Naive thymus-derived CD4-positive, alpha-beta T cell (primary cell): ENCODE measurements at regions of chr12 and their contacts with region 1.

Region 1: GRCh38 chr12:62250671-62251608 is 9.3 kb upstream of the USP15 start:
- DNase-seq: peak in 4 of 9 donors; percentile 12 to 34 (median 24)
- ATAC-seq: peak; percentile 42
- H3K4me3 ChIP-seq: no peak overlapping the region
- H3K4me3 Mint-ChIP-seq: peak overlapping the region; percentile 46 to 84 (median 78)
- H3K27ac ChIP-seq: peak overlapping the region; percentile 53
- H3K27ac Mint-ChIP-seq: peak overlapping the region; percentile 86 to 99 (median 93)
- H3K4me1 ChIP-seq: peaks cover 0 to 18% of the 10 kb centered on the region in 2 donors
- H3K4me1 Mint-ChIP-seq: peaks cover 21 to 48% (median 38%) of the 10 kb centered on the region in 7 donors
- H3K27me3 ChIP-seq: no peaks in the 10 kb centered on the region
- H3K27me3 Mint-ChIP-seq: peaks cover 0 to 3% (median 0%) of the 10 kb centered on the region in 5 donors

Region 2: DNA sequence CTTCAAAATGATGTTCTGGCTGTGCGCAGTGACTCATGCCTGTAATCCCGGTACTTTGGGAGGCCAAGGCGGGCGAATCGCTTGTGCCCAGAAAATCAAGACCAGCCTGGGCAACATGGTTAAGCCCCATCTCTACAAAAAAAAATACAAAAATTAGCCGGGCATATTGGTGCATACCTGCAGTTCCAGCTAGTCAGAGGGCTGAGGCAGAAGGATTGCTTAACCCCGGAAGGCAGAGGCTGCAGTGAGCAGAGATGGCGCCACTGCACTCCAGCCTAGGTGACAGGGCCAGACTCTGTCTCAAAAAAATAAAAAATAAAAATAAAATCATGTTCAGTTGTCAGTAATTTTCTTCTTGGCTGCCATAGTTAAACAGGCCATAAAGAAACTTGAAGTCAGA is 236.6 kb before region 1 on chr12:
- CTCF ChIA-PET with region 1: no interaction called
- POLR2A ChIA-PET with region 1: no interaction called
- intact Hi-C with region 1: no loop called
- DNase-seq: no peak
- ATAC-seq: no peak
- H3K4me3 ChIP-seq: no peak overlapping the region
- H3K4me3 Mint-ChIP-seq: no peak overlapping the region
- H3K27ac ChIP-seq: no peak overlapping the region
- H3K27ac Mint-ChIP-seq: no peak overlapping the region
- H3K4me1 ChIP-seq: no peaks in the 10 kb centered on the region
- H3K4me1 Mint-ChIP-seq: no peaks in the 10 kb centered on the region
- H3K27me3 ChIP-seq: no peaks in the 10 kb centered on the region
- H3K27me3 Mint-ChIP-seq: peaks cover 0 to 7% (median 5%) of the 10 kb centered on the region in 5 donors

Region 3: GRCh38 chr12:62215506-62215905 is 35.4 kb before region 1 on chr12:
- CTCF ChIA-PET with region 1: interaction called, 3 read pairs
- POLR2A ChIA-PET with region 1: interaction called, 3 read pairs
- intact Hi-C with region 1: loop called in 1 of 2 experiments (anchors 2 kb)
- DNase-seq: peak in 3 of 9 donors; percentile 31 to 49 (median 45)
- ATAC-seq: no peak
- H3K4me3 ChIP-seq: no peak overlapping the region
- H3K4me3 Mint-ChIP-seq: peak overlapping the region; percentile 16 to 80 (median 66)
- H3K27ac ChIP-seq: no peak overlapping the region
- H3K27ac Mint-ChIP-seq: peak overlapping the region; percentile 57 to 90 (median 74)
- H3K4me1 ChIP-seq: peaks cover 0 to 22% of the 10 kb centered on the region in 2 donors
- H3K4me1 Mint-ChIP-seq: peaks cover 11 to 57% (median 39%) of the 10 kb centered on the region in 7 donors
- H3K27me3 ChIP-seq: no peaks in the 10 kb centered on the region
- H3K27me3 Mint-ChIP-seq: peaks cover 0 to 14% (median 0%) of the 10 kb centered on the region in 5 donors

Region 4: DNA sequence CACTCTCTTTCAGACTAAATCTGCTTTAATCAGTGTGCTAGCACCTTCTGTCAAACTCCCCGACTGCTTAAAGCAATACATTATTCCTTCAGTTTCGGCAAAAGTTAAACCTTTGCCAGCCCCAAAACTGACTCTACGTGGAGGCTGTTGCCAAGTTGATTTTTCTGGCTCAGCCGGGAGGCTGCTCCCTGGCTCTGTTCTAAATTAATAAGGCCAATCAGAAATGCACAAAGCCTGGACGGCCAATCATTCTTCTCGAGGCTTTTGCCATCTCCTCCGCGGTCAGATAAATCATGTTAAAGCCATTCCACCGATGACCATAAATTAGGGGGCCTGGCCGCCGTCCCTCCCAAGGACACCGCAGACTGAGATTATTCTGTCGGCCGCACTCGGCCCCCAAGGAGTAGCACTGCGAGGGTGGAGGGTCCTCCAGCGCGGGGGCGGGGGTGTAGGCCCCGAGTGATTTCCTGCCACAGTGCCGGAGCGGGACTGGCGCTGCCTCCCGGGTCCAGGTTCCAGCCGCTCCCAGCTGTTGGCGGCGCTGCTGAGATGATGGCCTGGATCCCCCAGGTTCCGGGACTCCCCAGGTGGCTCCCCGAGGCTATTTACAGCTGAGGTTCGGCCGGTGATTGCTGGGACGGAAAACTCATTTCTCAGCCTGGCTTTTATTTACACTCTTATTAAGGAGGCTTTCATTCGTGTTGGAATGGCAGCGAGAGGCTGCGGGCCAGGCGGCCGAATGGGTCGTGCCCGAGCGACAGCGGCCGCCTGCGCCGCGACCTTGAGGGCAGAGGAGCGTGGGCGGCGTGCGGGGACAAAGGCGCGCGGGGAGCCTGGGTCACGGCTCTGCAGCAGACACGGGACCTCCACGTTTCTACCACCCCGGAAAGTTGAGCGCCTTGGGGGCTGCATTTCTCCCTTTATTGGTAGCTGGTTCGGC is 380.8 kb after region 1 on chr12:
- CTCF ChIA-PET with region 1: no interaction called
- POLR2A ChIA-PET with region 1: no interaction called
- intact Hi-C with region 1: no loop called
- DNase-seq: peak in 6 of 9 donors; percentile 8 to 18 (median 12)
- ATAC-seq: peak; percentile 65
- H3K4me3 ChIP-seq: peak overlapping the region; percentile 45
- H3K4me3 Mint-ChIP-seq: peak overlapping the region; percentile 77 to 90 (median 84)
- H3K27ac ChIP-seq: no peak overlapping the region
- H3K27ac Mint-ChIP-seq: no peak overlapping the region
- H3K4me1 ChIP-seq: peaks cover 0 to 9% of the 10 kb centered on the region in 2 donors
- H3K4me1 Mint-ChIP-seq: peaks cover 4 to 17% (median 9%) of the 10 kb centered on the region in 7 donors
- H3K27me3 ChIP-seq: peaks cover 7 to 11% of the 10 kb centered on the region in 2 donors
- H3K27me3 Mint-ChIP-seq: peaks cover 69 to 91% (median 81%) of the 10 kb centered on the region in 5 donors